Caco-2 (cell line): ENCODE measurements at regions of chr18 and their contacts with region 1.

Region 1: DNA sequence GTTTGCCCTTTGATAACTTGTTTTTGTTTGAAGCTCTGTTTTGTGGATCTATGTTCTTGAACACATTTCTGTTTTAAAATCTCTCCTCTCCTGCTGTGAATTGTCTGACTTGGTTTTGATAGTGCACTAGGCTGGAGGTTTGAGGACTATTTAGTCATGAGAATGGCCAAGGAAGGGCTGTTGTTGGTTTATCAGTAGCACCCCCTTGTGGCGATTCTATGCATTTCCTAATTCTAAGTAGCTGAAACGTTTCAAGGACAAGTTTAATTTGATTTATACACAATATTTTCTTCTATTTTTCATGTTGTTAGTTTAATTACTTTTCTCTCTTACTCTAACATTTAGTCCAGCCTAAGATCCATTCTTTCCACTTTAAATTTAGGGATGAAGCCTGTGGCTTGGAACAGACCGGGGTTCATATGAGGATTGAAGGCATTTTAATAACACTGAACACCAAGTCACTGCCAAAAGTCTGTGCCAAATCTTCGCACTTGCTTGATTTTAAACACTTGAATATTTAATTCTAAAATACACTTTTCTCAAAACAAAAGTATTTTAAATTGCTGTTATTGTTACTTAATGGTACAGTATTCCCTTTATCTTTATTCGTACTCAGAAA is 166.0 kb downstream of the SOCS6 start:
- DNase-seq: peak in 1 of 2 experiments; percentile 45
- H3K4me3 ChIP-seq: no peak overlapping the region
- H3K4me3 Mint-ChIP-seq: no peak overlapping the region
- H3K27ac Mint-ChIP-seq: no peak overlapping the region
- H3K4me1 ChIP-seq: no peaks in the 10 kb centered on the region
- H3K4me1 Mint-ChIP-seq: no peaks in the 10 kb centered on the region
- H3K27me3 ChIP-seq: no peaks in the 10 kb centered on the region
- H3K27me3 Mint-ChIP-seq: no peaks in the 10 kb centered on the region
- CTCF ChIP-seq: peak; percentile 41 to 57

Region 2: GRCh38 chr18:69636529-69637301 is 818.1 kb before region 1 on chr18:
- CTCF ChIA-PET with region 1: no interaction called
- POLR2A ChIA-PET with region 1: no interaction called
- intact Hi-C with region 1: loop called (anchors 2 kb)
- DNase-seq: peak in 1 of 2 experiments; percentile 19
- H3K4me3 ChIP-seq: no peak overlapping the region
- H3K4me3 Mint-ChIP-seq: no peak overlapping the region
- H3K27ac Mint-ChIP-seq: no peak overlapping the region
- H3K4me1 ChIP-seq: no peaks in the 10 kb centered on the region
- H3K4me1 Mint-ChIP-seq: no peaks in the 10 kb centered on the region
- H3K27me3 ChIP-seq: no peaks in the 10 kb centered on the region
- H3K27me3 Mint-ChIP-seq: peaks cover 5% of the 10 kb centered on the region
- CTCF ChIP-seq: peak; percentile 25 to 47

Region 3: DNA sequence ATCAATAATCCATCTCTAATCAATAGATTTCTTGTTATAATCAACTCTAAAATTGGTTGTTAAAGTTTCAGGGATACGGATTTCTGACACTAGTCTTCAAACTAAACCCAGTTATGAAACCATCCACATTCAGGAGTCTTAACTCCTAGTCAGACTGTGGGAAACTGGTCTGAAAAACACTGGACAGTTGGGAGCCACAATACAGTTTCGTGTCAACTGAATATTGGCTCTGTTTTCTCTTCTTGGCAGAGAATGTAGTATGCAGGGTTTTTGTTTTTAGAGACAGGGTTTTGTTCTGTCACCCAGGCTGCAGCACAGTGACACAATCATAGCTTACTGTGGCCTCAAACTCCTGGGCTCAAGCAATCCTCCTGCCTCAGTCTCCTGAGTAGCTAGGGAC is 372.4 kb before region 1 on chr18:
- CTCF ChIA-PET with region 1: no interaction called
- POLR2A ChIA-PET with region 1: no interaction called
- intact Hi-C with region 1: loop called (anchors 1 kb)
- DNase-seq: no peak
- H3K4me3 ChIP-seq: no peak overlapping the region
- H3K4me3 Mint-ChIP-seq: no peak overlapping the region
- H3K27ac Mint-ChIP-seq: no peak overlapping the region
- H3K4me1 ChIP-seq: no peaks in the 10 kb centered on the region
- H3K4me1 Mint-ChIP-seq: no peaks in the 10 kb centered on the region
- H3K27me3 ChIP-seq: no peaks in the 10 kb centered on the region
- H3K27me3 Mint-ChIP-seq: no peaks in the 10 kb centered on the region
- CTCF ChIP-seq: no peak

Region 4: DNA sequence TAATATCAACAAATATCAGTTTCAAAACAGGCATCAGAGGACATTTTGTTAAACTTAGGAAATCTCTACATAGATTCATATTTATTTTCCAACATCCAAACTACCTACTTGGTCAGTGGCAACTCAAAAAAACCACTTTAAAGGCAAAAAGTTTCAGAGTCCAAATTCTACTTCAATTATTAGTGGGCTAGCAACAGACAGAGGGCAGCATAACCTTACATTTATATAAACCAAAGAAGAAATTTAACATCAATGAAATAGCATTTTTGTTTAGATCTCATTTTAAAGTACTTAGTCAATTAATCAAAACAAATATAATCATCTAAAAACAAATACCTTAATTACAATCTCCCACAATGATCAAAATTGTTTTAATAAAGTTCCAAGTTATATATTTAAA is 282.6 kb before region 1 on chr18:
- CTCF ChIA-PET with region 1: no interaction called
- POLR2A ChIA-PET with region 1: no interaction called
- intact Hi-C with region 1: loop called (anchors 1 kb)
- DNase-seq: no peak
- H3K4me3 ChIP-seq: no peak overlapping the region
- H3K4me3 Mint-ChIP-seq: no peak overlapping the region
- H3K27ac Mint-ChIP-seq: no peak overlapping the region
- H3K4me1 ChIP-seq: no peaks in the 10 kb centered on the region
- H3K4me1 Mint-ChIP-seq: no peaks in the 10 kb centered on the region
- H3K27me3 ChIP-seq: no peaks in the 10 kb centered on the region
- H3K27me3 Mint-ChIP-seq: no peaks in the 10 kb centered on the region
- CTCF ChIP-seq: peak in 1 of 2 experiments; percentile 10

Region 5: GRCh38 chr18:70195852-70196434 is 258.9 kb before region 1 on chr18:
- CTCF ChIA-PET with region 1: interaction called, 4 read pairs
- POLR2A ChIA-PET with region 1: no interaction called
- intact Hi-C with region 1: loop called (anchors 1 kb)
- DNase-seq: peak in 1 of 2 experiments; percentile 23
- H3K4me3 ChIP-seq: no peak overlapping the region
- H3K4me3 Mint-ChIP-seq: no peak overlapping the region
- H3K27ac Mint-ChIP-seq: no peak overlapping the region
- H3K4me1 ChIP-seq: peaks cover 17% of the 10 kb centered on the region; the same call in 1 of the 2 replicates
- H3K4me1 Mint-ChIP-seq: peaks cover 12% of the 10 kb centered on the region
- H3K27me3 ChIP-seq: no peaks in the 10 kb centered on the region
- H3K27me3 Mint-ChIP-seq: no peaks in the 10 kb centered on the region
- CTCF ChIP-seq: peak; percentile 31 to 40

Region 6: DNA sequence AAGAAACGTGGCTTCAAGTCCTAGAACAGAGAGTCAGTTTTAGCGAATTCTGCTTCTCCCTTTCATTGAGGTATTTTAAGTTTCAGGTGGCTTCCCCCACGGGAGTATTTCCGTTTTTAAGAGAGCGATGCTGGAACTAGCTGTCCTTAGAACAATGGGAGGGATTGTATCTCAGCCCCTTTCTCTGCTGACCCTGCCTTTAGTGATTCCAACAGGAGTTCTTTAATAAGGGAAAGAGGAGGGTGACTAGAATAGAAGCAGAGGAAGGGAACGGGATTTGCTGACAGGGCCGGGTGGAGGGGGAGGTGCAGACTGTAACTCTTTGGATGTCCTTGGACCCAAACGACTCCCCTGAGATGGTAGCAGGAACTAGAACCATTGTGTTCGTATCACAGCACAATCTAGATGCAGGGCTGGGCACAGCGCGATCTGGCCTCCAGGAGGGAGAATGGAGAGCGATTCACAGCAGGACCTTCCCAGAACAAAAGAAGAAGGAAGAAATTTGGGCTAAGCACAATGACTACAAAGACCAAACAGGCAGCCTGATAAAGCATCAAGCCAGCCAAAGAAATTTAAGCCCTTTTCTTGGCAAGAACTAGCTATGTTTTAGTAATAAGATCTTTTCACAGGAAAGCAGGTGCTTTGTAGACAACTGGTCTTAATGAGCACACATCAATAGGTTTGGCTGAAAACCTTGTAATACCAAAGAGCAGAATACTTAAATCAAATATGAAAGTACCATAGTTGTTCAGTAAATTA is 233.5 kb before region 1 on chr18:
- CTCF ChIA-PET with region 1: no interaction called
- POLR2A ChIA-PET with region 1: no interaction called
- intact Hi-C with region 1: no loop called
- DNase-seq: no peak
- H3K4me3 ChIP-seq: no peak overlapping the region
- H3K4me3 Mint-ChIP-seq: no peak overlapping the region
- H3K27ac Mint-ChIP-seq: no peak overlapping the region
- H3K4me1 ChIP-seq: no peaks in the 10 kb centered on the region
- H3K4me1 Mint-ChIP-seq: peaks cover 6% of the 10 kb centered on the region
- H3K27me3 ChIP-seq: no peaks in the 10 kb centered on the region
- H3K27me3 Mint-ChIP-seq: no peaks in the 10 kb centered on the region
- CTCF ChIP-seq: no peak

Region 7: DNA sequence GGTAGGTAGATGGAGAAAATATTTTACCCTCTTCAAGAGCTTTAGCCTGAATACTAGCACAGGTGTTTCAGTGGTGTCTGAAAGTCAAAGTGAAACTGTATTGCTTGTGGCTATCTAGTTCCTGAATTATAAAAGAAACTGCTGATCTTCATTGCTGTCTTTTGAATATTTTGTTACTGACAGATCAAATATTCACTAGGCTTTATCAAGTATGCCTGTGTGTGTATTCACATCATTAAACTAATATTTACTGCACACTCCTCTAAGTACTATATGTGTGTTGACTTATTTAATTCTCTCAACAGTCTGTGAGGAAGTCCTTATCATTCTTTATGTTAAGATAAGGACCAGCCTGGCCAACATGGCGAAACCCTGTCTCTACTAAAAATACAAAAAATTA is 26.4 kb before region 1 on chr18:
- CTCF ChIA-PET with region 1: no interaction called
- POLR2A ChIA-PET with region 1: no interaction called
- intact Hi-C with region 1: no loop called
- DNase-seq: no peak
- H3K4me3 ChIP-seq: no peak overlapping the region
- H3K4me3 Mint-ChIP-seq: no peak overlapping the region
- H3K27ac Mint-ChIP-seq: peak overlapping the region; percentile 48
- H3K4me1 ChIP-seq: peaks cover 49% of the 10 kb centered on the region
- H3K4me1 Mint-ChIP-seq: peaks cover 7% of the 10 kb centered on the region
- H3K27me3 ChIP-seq: no peaks in the 10 kb centered on the region
- H3K27me3 Mint-ChIP-seq: no peaks in the 10 kb centered on the region
- CTCF ChIP-seq: no peak